Mucosa of descending colon (tissue), 3 donors: ENCODE measurements at regions of chrX and their contacts with region 1.

Region 1: GRCh38 chrX:132631579-132632232 is 142.9 kb upstream of the MBNL3 start:
- DNase-seq: no peak
- ATAC-seq: peak; percentile 25
- H3K4me3 ChIP-seq: no peak overlapping the region
- H3K4me1 ChIP-seq: no peaks in the 10 kb centered on the region
- CTCF ChIP-seq: no peak

Region 2: DNA sequence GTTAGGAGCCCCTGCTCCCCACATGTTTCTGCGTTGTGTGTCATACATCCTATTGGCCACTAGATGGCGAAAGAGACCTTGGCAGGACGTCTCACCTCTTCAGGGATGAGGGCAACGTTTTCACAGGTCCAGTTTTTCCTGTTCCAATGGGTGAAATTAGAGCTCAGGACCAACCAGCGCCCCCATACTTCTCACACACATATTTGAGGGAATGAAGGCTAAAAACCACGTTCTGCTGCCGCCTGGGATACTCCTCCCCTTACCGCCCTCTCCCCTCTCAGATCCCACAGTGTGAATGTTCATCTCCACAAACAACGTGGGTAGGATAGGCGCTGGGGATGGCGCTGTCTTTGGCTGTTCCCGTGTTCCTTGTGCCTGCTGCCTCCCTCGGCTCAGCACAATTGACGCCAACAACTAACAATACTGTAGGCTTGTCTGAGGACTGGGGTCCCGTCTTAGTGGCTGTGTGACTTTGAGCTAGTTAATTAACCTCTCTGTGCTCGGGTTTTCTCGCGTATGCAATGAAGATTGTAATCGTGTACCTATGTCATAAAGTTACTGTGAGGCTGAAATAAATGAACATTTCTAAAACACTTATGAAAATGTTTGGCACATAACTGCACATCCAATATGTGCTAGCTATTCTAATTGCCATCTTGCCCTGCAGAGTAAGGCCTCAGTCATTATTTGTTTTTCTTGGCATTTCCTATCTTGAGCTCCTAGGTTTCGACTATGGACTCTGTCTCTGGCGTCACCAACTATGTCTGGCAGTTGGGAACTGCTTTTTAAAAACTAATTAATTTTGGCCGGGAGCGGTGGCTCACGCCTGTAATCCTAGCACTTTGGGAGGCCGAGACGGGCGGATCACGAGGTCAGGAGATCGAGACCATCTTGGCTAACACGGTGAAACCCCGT is 790.0 kb before region 1 on chrX:
- intact Hi-C with region 1: loop called in 1 of 2 experiments (anchors 10 kb)
- DNase-seq: peak in 1 of 3 donors; percentile 16
- ATAC-seq: peak; percentile 87
- H3K4me3 ChIP-seq: no peak overlapping the region
- H3K4me1 ChIP-seq: no peaks in the 10 kb centered on the region
- CTCF ChIP-seq: peak; percentile 40

Region 3: DNA sequence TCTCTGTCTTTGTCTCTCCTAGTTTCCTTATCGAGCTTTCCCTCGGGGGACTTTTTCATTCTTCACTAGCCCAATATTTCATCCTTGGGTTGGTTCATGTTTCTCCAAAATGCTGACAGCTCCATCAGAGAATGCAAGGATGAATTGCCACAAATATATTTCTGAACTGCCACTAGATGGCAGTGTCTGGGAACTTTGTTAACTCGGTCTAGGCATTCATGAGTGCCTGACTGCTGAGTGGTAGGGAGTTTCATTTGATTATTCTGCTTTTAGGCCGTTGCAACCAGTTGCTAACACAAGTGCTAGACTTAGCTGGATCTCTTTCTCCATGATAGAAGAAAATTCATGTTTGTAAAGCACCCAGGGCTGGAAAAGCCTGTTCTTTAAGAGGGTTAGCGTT is 338.9 kb before region 1 on chrX:
- intact Hi-C with region 1: loop called in 1 of 2 experiments (anchors 10 kb)
- DNase-seq: peak in 1 of 3 donors; percentile 15
- ATAC-seq: peak; percentile 68
- H3K4me3 ChIP-seq: no peak overlapping the region
- H3K4me1 ChIP-seq: no peaks in the 10 kb centered on the region
- CTCF ChIP-seq: peak; percentile 10

Region 4: DNA sequence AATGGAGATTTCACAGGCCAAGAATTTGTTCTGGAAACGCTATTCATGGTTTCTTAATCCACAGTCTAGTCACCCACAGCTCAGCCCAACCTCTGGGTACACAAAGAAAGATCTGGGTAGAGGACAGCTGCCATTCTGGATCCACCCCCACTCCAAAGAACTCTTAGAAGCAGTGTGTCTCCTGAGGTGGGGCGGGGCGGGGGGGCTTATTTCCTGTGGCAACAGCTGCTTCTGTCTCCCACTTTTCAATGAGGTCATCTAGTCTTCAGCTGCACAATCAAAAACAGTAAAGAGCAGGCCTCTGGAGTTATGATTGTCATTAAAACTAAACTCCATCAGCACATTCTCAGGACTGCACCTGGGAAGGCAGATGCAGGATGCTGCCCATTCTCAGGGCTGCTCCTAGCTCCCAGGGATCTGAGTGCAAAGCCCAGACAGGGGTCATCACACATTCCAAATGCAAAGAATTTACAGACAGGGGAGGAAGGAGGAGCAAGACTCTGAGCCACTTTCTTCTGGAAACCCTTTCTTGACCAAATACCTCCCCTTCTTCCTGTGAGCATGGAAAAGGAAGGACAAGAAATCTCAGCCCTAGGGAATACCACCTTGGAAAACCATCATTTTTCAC is 119.5 kb after region 1 on chrX:
- intact Hi-C with region 1: no loop called
- DNase-seq: no peak
- ATAC-seq: no peak
- H3K4me3 ChIP-seq: no peak overlapping the region
- H3K4me1 ChIP-seq: no peaks in the 10 kb centered on the region
- CTCF ChIP-seq: no peak